ENCODE measurements at regions of chr15 and their contacts with region 1.

Region 1: GRCh38 chr15:48861813-48862431 is 16.0 kb upstream of the EID1 start:
- DNase-seq: peak; percentile 66 to 70
- H3K4me3 ChIP-seq: no peak overlapping the region
- H3K4me1 ChIP-seq: no peaks in the 10 kb centered on the region
- H3K27me3 ChIP-seq: no peaks in the 10 kb centered on the region

Region 2: GRCh38 chr15:48352474-48353072 is 509.3 kb before region 1 on chr15:
- in situ Hi-C with region 1: loop called (anchors 25 kb)
- DNase-seq: peak; percentile 68 to 76
- H3K4me3 ChIP-seq: no peak overlapping the region
- H3K4me1 ChIP-seq: no peaks in the 10 kb centered on the region; the same call in 1 of the 2 replicates
- H3K27me3 ChIP-seq: no peaks in the 10 kb centered on the region

Region 3: GRCh38 chr15:49421991-49422390 is 560.1 kb after region 1 on chr15:
- in situ Hi-C with region 1: loop called (anchors 25 kb)
- DNase-seq: peak; percentile 49 to 73
- H3K4me3 ChIP-seq: no peak overlapping the region
- H3K4me1 ChIP-seq: peaks cover 6% of the 10 kb centered on the region; the same call in 1 of the 2 replicates
- H3K27me3 ChIP-seq: no peaks in the 10 kb centered on the region

Region 4: DNA sequence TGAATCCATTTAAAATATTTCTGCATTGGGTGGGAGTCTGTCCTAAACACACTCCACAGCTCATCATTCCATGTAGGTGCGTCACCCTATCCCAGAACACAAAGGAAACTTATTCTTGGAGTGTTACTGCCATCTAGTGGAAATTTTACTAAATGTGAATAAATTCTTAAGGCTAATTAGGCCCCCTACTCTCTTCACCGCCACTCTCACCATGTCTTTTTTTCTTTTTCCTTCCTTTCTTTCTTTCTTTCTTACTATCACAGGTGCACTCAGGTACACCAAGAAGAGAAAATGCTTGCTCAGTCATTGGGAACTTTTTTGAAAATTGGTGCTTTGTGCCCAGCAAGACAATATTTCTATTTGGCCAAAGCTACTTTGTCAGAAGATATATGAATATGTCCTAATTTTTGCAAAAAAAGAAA is 1283.5 kb after region 1 on chr15:
- in situ Hi-C with region 1: loop called (anchors 10 kb)
- DNase-seq: peak; percentile 33 to 62
- H3K4me3 ChIP-seq: no peak overlapping the region
- H3K4me1 ChIP-seq: peaks cover 6% of the 10 kb centered on the region
- H3K27me3 ChIP-seq: no peaks in the 10 kb centered on the region

Measured in HAP-1 (cell line).